ENCODE measurements at regions of chr2 and their contacts with region 1.

Region 1: DNA sequence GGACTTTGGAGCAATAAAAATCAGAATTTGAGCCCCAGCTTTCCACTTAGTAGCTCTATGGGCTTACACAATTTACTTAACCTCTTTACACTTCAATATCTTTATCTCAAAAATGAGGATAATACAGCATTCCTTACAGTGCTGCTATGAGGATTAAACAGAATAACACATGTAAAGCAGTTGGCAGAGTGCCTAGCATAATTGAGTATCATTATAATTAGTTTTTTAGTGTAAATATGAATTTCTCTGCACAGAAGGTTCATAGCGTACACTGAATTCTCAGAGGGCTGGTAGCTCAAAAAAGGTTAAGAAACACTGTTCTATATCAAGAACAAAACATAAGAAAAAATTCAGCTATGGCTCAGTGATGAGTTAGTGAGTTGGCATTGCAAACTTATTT is 190.4 kb upstream of the CYP26B1 start:
- DNase-seq: no peak
- H3K4me3 ChIP-seq: no peak overlapping the region
- CTCF ChIP-seq: no peak

Region 2: DNA sequence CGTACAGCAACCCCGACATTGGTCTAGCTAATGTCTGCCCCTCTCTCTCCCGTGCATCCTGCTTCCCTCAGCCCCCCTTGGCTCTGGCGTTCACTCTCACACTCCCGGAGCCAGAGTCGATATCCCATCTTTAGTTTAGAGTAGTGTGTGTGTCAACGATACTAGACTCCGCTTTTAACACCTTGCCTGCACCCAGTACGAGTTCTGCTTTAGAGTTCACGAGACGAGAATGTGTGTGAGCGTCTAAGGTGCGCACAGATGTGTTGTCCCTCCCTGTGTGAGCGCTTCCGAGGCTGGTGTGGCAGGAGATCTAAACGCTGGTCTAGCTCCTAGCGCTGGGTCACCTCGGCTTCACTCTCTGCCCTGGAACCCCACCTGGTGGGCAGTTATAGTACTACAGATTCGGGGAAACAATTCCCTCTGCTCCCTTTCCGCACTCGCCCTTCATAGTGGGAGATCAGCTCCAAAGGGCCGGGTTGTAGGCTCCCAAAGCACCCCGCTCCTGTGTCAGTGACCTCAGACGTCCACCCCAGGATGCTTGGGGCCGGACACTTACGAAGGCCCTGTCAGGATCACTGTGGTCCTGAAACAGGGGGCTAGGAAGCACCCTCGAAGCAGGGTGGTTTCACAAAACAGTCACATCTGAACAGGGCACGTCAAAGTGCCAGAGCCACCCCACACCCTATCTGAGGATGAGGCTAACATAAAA is 187.8 kb before region 1 on chr2:
- CTCF ChIA-PET with region 1: no interaction called
- POLR2A ChIA-PET with region 1: no interaction called
- DNase-seq: no peak
- H3K4me3 ChIP-seq: peak overlapping the region; percentile 34
- CTCF ChIP-seq: peak; percentile 73

Region 3: GRCh38 chr2:72325592-72326422 is 12.3 kb before region 1 on chr2:
- CTCF ChIA-PET with region 1: interaction called, 10 read pairs
- POLR2A ChIA-PET with region 1: no interaction called
- DNase-seq: no peak
- H3K4me3 ChIP-seq: no peak overlapping the region
- CTCF ChIP-seq: peak; percentile 49

Measured in AG04449 (cell line).